CD8-positive, alpha-beta T cell (primary cell): ENCODE measurements at regions of chr18 and their contacts with region 1.

Region 1: DNA sequence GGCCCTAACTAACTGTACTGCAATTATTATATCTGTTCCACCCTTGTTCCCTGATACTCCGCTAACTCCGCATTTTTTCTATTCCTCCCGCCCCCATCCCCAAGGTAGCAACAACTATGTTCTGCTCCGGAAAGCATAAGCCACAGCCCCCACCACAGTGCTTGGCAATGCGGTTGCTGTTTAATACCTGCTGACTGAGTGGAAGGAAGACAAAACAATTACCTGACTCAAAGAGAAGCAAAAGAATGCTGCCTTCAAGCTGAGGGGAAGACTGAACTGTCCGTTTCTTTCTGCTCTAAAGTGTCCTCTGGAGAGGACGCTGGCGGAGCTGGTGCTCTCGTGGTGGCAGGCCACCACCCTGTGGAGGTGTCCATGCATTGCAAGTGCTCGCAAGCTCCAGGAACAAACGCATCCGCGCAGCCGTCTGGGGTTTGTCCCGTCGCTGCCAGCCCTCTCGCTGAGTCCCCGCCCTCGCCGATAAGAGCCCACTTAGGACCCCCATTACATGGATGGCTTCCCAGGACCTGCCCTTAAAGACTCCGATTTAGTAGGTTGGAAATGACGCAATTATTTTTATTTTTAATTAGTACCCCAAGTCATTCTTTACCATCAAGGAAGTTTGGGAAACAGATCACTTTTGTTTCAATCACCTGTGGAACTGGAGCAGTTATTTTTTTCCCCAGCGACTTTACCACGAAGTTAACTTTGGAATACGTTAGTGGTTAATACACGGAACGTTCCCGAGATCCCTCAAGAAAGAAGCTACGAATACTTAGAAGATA is 1.6 kb upstream of the MYL12A start:
- DNase-seq: peak; percentile 44 to 89 (median 78)
- ATAC-seq: peak; percentile 60
- H3K4me3 ChIP-seq: peak overlapping the region; percentile 77 to 90
- H3K4me3 Mint-ChIP-seq: peak overlapping the region; percentile 92
- H3K27ac ChIP-seq: peak overlapping the region; percentile 79 to 89
- H3K27ac Mint-ChIP-seq: peak overlapping the region; percentile 90
- H3K4me1 ChIP-seq: peaks cover 11% of the 10 kb centered on the region
- H3K4me1 Mint-ChIP-seq: peaks cover 39% of the 10 kb centered on the region
- H3K27me3 ChIP-seq: no peaks in the 10 kb centered on the region
- H3K27me3 Mint-ChIP-seq: no peaks in the 10 kb centered on the region
- CTCF ChIP-seq: peak; percentile 84

Region 2: GRCh38 chr18:2932247-2933181 is 313.5 kb before region 1 on chr18:
- CTCF ChIA-PET with region 1: interaction called, 12 read pairs
- POLR2A ChIA-PET with region 1: no interaction called
- intact Hi-C with region 1: loop called (anchors 1 kb)
- DNase-seq: peak in 6 of 9 experiments; percentile 37 to 82 (median 52)
- ATAC-seq: peak; percentile 79
- H3K4me3 ChIP-seq: no peak overlapping the region
- H3K4me3 Mint-ChIP-seq: no peak overlapping the region
- H3K27ac ChIP-seq: peak overlapping the region in 1 of 2 experiments; percentile 51
- H3K27ac Mint-ChIP-seq: peak overlapping the region; percentile 89
- H3K4me1 ChIP-seq: peaks cover 6% of the 10 kb centered on the region
- H3K4me1 Mint-ChIP-seq: peaks cover 23% of the 10 kb centered on the region
- H3K27me3 ChIP-seq: no peaks in the 10 kb centered on the region
- H3K27me3 Mint-ChIP-seq: no peaks in the 10 kb centered on the region
- CTCF ChIP-seq: peak; percentile 96

Region 3: GRCh38 chr18:3012964-3013804 is 232.9 kb before region 1 on chr18 and contains the start of gene LPIN2:
- CTCF ChIA-PET with region 1: interaction called, 4 read pairs
- POLR2A ChIA-PET with region 1: interaction called, 3 read pairs
- intact Hi-C with region 1: loop called (anchors 1 to 2 kb)
- DNase-seq: peak; percentile 93 to 98 (median 95)
- ATAC-seq: peak; percentile 87
- H3K4me3 ChIP-seq: peak within 1 kb of the TSS; percentile 53
- H3K4me3 Mint-ChIP-seq: peak within 1 kb of the TSS; percentile 95
- H3K27ac ChIP-seq: peak within 1 kb of the TSS; percentile 73 to 79
- H3K27ac Mint-ChIP-seq: peak within 1 kb of the TSS; percentile 93
- H3K4me1 ChIP-seq: peaks cover 55% of the 10 kb centered on the region
- H3K4me1 Mint-ChIP-seq: peaks cover 64% of the 10 kb centered on the region
- H3K27me3 ChIP-seq: no peaks in the 10 kb centered on the region
- H3K27me3 Mint-ChIP-seq: no peaks in the 10 kb centered on the region
- CTCF ChIP-seq: no peak
- total RNA-seq, gene LPIN2: 50.3 to 50.9 TPM

Region 4: GRCh38 chr18:3350566-3351527 is 104.8 kb after region 1 on chr18:
- CTCF ChIA-PET with region 1: no interaction called
- POLR2A ChIA-PET with region 1: no interaction called
- intact Hi-C with region 1: no loop called
- DNase-seq: no peak
- ATAC-seq: no peak
- H3K4me3 ChIP-seq: no peak overlapping the region
- H3K4me3 Mint-ChIP-seq: no peak overlapping the region
- H3K27ac ChIP-seq: no peak overlapping the region
- H3K27ac Mint-ChIP-seq: no peak overlapping the region
- H3K4me1 ChIP-seq: no peaks in the 10 kb centered on the region
- H3K4me1 Mint-ChIP-seq: no peaks in the 10 kb centered on the region
- H3K27me3 ChIP-seq: no peaks in the 10 kb centered on the region
- H3K27me3 Mint-ChIP-seq: peaks cover 2% of the 10 kb centered on the region
- CTCF ChIP-seq: no peak